ENCODE measurements at regions of chr11 and their contacts with region 1.

Region 1: DNA sequence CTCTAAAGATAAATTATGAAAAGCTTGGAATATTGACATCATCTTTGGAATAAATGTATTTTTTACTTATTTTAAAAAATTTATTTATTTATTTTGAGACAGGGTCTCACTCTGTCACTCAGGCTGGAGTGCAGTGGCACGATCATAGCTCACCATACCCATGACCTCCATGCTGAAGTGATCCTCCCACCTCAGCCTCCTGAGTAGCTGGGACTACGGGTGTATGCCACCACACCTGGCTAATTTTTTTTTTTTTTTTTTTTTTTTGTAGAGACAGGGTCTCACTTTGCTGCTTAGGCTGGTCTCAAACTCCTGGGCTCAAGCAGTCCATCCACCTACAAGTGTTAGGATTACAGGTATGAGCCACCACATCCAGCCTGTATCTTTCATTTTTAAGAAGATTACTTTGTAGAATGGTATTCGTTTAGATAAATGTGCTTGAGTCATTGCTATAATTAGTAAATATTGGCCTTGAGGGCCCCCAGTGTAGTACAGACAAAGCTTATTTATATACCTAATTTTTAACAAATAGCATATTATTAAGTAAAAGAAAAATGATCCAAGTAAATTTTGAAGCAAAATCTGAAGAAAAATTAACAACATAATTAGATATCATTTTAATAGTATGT is 8.5 kb downstream of the SWAP70 start:
- DNase-seq: no peak
- H3K4me3 ChIP-seq: no peak overlapping the region
- H3K27ac ChIP-seq: no peak overlapping the region
- H3K4me1 ChIP-seq: no peaks in the 10 kb centered on the region
- H3K27me3 ChIP-seq: no peaks in the 10 kb centered on the region
- CTCF ChIP-seq: no peak

Region 2: DNA sequence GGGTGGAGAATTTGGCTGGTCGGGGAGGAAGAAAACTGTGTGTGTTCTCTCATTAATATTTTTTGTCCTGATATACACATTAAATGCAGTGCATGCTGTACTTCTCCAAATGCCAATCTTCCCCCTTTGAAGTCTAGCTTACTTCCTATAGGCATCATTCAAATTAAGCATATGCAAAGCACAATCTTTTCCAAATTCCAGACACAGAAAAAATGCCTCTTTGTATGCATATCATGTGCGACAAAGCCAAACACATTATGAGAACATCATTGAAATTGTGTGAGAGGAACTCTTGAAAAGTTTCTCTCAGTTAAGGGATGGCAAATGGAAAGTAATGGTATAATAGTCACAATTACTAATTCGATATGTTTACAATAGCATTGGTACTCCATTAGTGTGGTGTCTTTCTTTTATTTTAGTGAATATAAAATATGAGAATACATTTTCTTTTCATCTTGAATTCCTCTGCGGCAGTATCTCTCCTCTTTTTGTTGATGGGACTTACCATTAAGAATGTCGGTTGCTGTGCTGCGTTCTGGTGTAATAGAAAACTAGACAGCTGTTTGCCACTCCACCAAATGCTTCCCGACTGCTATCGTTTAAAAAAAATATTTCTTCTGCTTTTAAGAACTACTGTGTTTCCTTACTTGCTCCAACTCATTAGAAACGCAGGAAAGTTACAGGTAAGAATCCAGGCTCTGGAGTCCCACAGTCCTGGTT is 649.3 kb before region 1 on chr11:
- CTCF ChIA-PET with region 1: no interaction called
- POLR2A ChIA-PET with region 1: interaction called, 12 read pairs
- intact Hi-C with region 1: no loop called
- DNase-seq: no peak
- H3K4me3 ChIP-seq: no peak overlapping the region
- H3K27ac ChIP-seq: no peak overlapping the region
- H3K4me1 ChIP-seq: no peaks in the 10 kb centered on the region
- H3K27me3 ChIP-seq: no peaks in the 10 kb centered on the region
- CTCF ChIP-seq: no peak

Region 3: GRCh38 chr11:9601037-9601875 is 71.1 kb before region 1 on chr11:
- CTCF ChIA-PET with region 1: no interaction called
- POLR2A ChIA-PET with region 1: no interaction called
- intact Hi-C with region 1: no loop called
- DNase-seq: peak; percentile 53 to 84
- H3K4me3 ChIP-seq: peak overlapping the region; percentile 35; the same call in 1 of the 2 replicates
- H3K27ac ChIP-seq: peak overlapping the region; percentile 97
- H3K4me1 ChIP-seq: peaks cover 24% of the 10 kb centered on the region
- H3K27me3 ChIP-seq: no peaks in the 10 kb centered on the region
- CTCF ChIP-seq: no peak

Region 4: DNA sequence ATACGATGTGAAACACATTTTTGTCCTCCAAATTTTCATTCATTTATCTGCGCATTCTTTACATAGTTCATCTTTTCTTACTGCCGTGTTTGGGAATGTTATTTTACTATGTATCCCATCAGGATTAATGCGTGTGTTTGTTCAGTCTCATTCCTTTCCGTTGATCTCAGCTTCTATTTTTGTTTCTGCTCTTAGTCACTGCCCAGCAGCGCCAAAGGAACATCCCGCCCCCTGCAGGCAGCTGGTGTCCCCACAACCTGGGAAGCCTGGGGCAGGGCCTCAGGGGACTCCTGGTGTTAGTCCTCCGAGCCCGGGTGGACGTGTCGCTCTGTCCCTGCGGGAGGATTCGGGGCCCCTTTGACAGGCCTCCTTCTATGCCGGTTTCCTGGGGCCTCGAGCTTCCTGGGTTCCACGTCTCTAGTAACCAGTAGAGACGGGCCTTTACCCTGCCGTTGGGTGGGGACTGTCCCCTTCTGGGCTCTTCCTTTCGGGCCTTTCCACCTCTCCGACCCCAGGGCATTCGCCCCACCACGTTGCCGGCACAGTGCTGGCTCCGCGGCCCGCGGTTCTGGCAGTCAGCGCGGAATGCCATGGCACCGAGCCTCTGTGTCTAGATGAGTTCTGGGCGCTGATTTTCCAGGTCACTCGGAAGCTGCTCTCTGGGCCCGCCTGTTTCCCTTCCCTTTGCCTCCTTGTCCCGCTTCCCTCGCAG is 59.1 kb before region 1 on chr11:
- CTCF ChIA-PET with region 1: no interaction called
- POLR2A ChIA-PET with region 1: no interaction called
- intact Hi-C with region 1: no loop called
- DNase-seq: peak; percentile 90 to 92
- H3K4me3 ChIP-seq: peak overlapping the region; percentile 75
- H3K27ac ChIP-seq: peak overlapping the region; percentile 96
- H3K4me1 ChIP-seq: peaks cover 25% of the 10 kb centered on the region
- H3K27me3 ChIP-seq: no peaks in the 10 kb centered on the region
- CTCF ChIP-seq: peak; percentile 87

Region 5: DNA sequence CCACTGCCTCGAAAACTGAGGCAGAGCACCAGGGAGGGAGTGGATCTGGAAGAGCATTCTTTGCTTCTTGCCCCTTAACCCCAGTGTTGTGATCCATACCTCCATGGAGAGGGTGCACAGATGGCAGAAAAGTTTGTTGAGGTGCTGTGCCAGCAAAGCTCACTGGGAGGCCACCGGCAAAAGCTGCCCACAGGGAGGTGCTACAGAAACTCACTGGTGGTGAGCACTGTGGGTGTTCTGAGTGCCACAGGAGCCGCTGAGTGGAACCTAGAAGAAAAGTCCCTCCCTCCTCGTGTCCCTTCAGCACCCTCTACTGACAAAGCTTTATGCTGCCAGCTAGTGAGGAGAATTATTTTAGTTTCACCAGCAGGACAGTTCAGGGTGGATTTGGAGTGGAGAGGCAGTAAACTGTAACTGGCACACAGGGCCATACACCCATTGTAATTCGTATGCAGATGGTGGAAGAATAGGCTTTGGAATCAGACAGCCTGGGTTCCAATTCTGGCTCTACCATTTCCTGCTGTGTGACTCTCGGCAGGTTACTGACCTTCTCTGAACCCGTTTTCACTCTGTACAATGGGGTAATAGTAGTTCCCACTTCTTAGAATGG is 76.1 kb after region 1 on chr11:
- CTCF ChIA-PET with region 1: no interaction called
- POLR2A ChIA-PET with region 1: interaction called, 12 read pairs
- intact Hi-C with region 1: no loop called
- DNase-seq: peak; percentile 25 to 44
- H3K4me3 ChIP-seq: no peak overlapping the region
- H3K27ac ChIP-seq: no peak overlapping the region
- H3K4me1 ChIP-seq: 0 out of 2 replicates have a peak, but pooled peaks cover under 1% of the 10 kb centered on the region
- H3K27me3 ChIP-seq: no peaks in the 10 kb centered on the region
- CTCF ChIP-seq: peak; percentile 58

Measured in PC-9 (cell line).